ENCODE measurements at regions of chr11 and their contacts with region 1.

Region 1: DNA sequence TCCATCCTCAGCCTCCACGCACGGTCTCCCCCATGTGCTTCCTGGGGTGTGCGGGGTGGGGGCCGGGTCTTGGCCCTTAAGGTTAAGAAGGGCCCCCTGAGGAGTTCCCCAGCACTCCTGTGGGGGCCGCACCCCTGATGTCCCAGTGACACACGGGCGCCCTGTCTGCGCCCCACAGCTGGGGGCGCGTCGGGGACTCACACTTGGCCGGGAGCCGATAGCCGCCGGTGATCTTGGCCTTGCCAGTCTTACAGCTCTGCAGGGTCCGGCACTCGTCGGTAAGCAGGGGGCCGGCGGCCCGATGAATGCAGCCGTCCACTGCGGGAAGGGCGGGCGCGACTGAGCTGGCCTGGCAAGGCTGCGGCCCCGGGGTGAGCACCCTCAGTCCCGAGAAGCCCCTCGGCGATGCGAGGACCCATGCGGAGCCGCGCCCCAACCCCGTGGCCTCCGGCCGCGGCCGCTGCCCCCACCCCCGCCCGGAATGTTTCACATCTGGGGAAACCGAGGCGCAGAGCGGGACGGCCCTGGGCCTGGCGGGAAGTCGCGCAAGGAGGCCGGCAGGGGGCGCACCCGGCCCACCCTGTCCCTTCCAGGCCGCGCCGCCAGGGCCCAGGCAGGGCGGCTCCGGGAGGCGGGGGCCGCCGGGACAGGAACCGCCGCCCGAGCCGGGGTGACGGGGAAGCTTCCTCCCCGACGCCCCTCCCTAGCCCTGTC is 13.9 kb downstream of the OTUB1 start:
- DNase-seq: peak; percentile 76
- ATAC-seq: peak; percentile 77
- H3K4me3 Mint-ChIP-seq: peak overlapping the region; percentile 15
- H3K27ac Mint-ChIP-seq: no peak overlapping the region
- H3K4me1 Mint-ChIP-seq: peaks cover 6% of the 10 kb centered on the region
- H3K27me3 Mint-ChIP-seq: peaks cover 4% of the 10 kb centered on the region
- CTCF ChIP-seq: peak; percentile 87

Region 2: GRCh38 chr11:63986932-63987513 is 13.2 kb before region 1 on chr11:
- CTCF ChIA-PET with region 1: interaction called, 17 read pairs
- POLR2A ChIA-PET with region 1: interaction called, 26 read pairs
- intact Hi-C with region 1: no loop called
- DNase-seq: no peak
- ATAC-seq: no peak
- H3K4me3 Mint-ChIP-seq: peak overlapping the region; percentile 74
- H3K27ac Mint-ChIP-seq: no peak overlapping the region
- H3K4me1 Mint-ChIP-seq: peaks cover 32% of the 10 kb centered on the region
- H3K27me3 Mint-ChIP-seq: no peaks in the 10 kb centered on the region
- CTCF ChIP-seq: no peak

Region 3: GRCh38 chr11:64025205-64025604 is 25.0 kb after region 1 on chr11:
- CTCF ChIA-PET with region 1: interaction called, 16 read pairs
- POLR2A ChIA-PET with region 1: no interaction called
- intact Hi-C with region 1: no loop called
- DNase-seq: no peak
- ATAC-seq: no peak
- H3K4me3 Mint-ChIP-seq: no peak overlapping the region
- H3K27ac Mint-ChIP-seq: no peak overlapping the region
- H3K4me1 Mint-ChIP-seq: peaks cover 3% of the 10 kb centered on the region
- H3K27me3 Mint-ChIP-seq: peaks cover 16% of the 10 kb centered on the region
- CTCF ChIP-seq: no peak

Region 4: GRCh38 chr11:64067230-64067993 is 67.2 kb after region 1 on chr11:
- CTCF ChIA-PET with region 1: interaction called, 11 read pairs
- POLR2A ChIA-PET with region 1: no interaction called
- intact Hi-C with region 1: no loop called
- DNase-seq: peak; percentile 50
- ATAC-seq: peak; percentile 73
- H3K4me3 Mint-ChIP-seq: no peak overlapping the region
- H3K27ac Mint-ChIP-seq: no peak overlapping the region
- H3K4me1 Mint-ChIP-seq: peaks cover 12% of the 10 kb centered on the region
- H3K27me3 Mint-ChIP-seq: no peaks in the 10 kb centered on the region
- CTCF ChIP-seq: no peak

Region 5: GRCh38 chr11:64165849-64166635 is 165.9 kb after region 1 on chr11 and contains the start of gene MACROD1:
- CTCF ChIA-PET with region 1: interaction called, 21 read pairs
- POLR2A ChIA-PET with region 1: interaction called, 3 read pairs
- intact Hi-C with region 1: no loop called
- DNase-seq: peak; percentile 92
- ATAC-seq: peak; percentile 93
- H3K4me3 Mint-ChIP-seq: peak within 1 kb of the TSS; percentile 84
- H3K27ac Mint-ChIP-seq: peak within 1 kb of the TSS; percentile 86
- H3K4me1 Mint-ChIP-seq: peaks cover 18% of the 10 kb centered on the region
- H3K27me3 Mint-ChIP-seq: no peaks in the 10 kb centered on the region
- CTCF ChIP-seq: no peak
- total RNA-seq, gene MACROD1: 38.7 to 38.8 TPM